Activated CD4-positive, alpha-beta T cell treated with anti-CD3 and anti-CD28 coated beads, Interleukin-2, amount 10 ng/mL, durations not matched to agents 7 days and 5 days (primary cell): ENCODE measurements at regions of chr19 and their contacts with region 1.

Region 1: GRCh38 chr19:8580710-8581281 is 3.6 kb upstream of the MYO1F start:
- DNase-seq: peak; percentile 88
- H3K4me3 Mint-ChIP-seq: no peak overlapping the region
- H3K27ac Mint-ChIP-seq: no peak overlapping the region
- H3K4me1 Mint-ChIP-seq: peaks cover 34% of the 10 kb centered on the region
- H3K27me3 Mint-ChIP-seq: peaks cover 3% of the 10 kb centered on the region

Region 2: DNA sequence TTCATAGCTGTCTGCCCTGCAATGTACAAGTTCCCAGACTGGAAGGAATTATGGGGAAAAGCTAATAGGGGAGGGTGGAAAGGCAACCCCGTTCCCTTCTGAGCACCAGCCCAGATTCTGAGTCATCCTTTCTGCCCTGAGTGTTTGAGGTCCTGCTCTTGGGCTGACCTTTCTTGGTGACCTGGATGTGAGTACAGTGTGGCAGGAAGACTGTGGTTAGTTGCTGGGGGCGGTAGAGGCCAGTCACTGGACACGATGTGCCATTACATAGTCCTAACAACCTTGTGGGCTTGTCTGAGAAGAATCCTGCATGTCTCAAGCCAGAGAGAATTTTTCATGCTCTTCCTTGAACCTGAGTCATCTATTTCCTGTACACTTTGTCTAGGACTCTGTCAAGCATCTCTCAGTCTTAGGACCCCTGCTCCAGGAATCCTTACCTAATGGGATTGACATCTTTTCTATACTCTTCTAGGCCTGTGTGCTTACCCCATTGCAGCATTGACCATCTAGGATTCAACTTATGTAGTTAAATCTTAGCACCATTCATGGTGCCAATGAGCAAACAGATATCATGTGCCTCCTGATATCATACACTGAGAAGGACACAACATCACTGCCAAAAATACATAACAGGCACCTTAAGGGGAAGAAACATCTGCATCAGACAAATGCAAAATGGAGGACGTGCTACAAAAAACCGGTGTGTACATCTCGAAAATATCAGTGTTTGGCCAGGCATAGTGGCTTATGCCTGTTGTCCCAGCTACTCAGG is 225.0 kb before region 1 on chr19:
- CTCF ChIA-PET with region 1: interaction called, 10 read pairs
- POLR2A ChIA-PET with region 1: no interaction called
- DNase-seq: no peak
- H3K4me3 Mint-ChIP-seq: no peak overlapping the region
- H3K27ac Mint-ChIP-seq: no peak overlapping the region
- H3K4me1 Mint-ChIP-seq: peaks cover 4% of the 10 kb centered on the region
- H3K27me3 Mint-ChIP-seq: peaks cover 12% of the 10 kb centered on the region

Region 3: GRCh38 chr19:8444645-8445487 is 135.9 kb before region 1 on chr19 and contains the start of gene HNRNPM:
- CTCF ChIA-PET with region 1: interaction called, 4 read pairs
- POLR2A ChIA-PET with region 1: interaction called, 14 read pairs
- DNase-seq: peak; percentile 100
- H3K4me3 Mint-ChIP-seq: peak within 1 kb of the TSS; percentile 91
- H3K27ac Mint-ChIP-seq: peak within 1 kb of the TSS; percentile 97
- H3K4me1 Mint-ChIP-seq: peaks cover 40% of the 10 kb centered on the region
- H3K27me3 Mint-ChIP-seq: no peaks in the 10 kb centered on the region
- total RNA-seq, gene HNRNPM: 248 to 265 TPM

Region 4: GRCh38 chr19:8557642-8558238 is 23.1 kb before region 1 on chr19:
- CTCF ChIA-PET with region 1: interaction called, 10 read pairs
- POLR2A ChIA-PET with region 1: no interaction called
- DNase-seq: no peak
- H3K4me3 Mint-ChIP-seq: no peak overlapping the region
- H3K27ac Mint-ChIP-seq: peak overlapping the region; percentile 82
- H3K4me1 Mint-ChIP-seq: peaks cover 32% of the 10 kb centered on the region
- H3K27me3 Mint-ChIP-seq: no peaks in the 10 kb centered on the region

Region 5: GRCh38 chr19:8592231-8593009 is 11.6 kb after region 1 on chr19:
- CTCF ChIA-PET with region 1: interaction called, 23 read pairs
- POLR2A ChIA-PET with region 1: no interaction called
- DNase-seq: peak; percentile 75
- H3K4me3 Mint-ChIP-seq: peak overlapping the region; percentile 53
- H3K27ac Mint-ChIP-seq: no peak overlapping the region
- H3K4me1 Mint-ChIP-seq: peaks cover 13% of the 10 kb centered on the region
- H3K27me3 Mint-ChIP-seq: peaks cover 15% of the 10 kb centered on the region